ENCODE measurements at regions of chr2 and their contacts with region 1.

Region 1: DNA sequence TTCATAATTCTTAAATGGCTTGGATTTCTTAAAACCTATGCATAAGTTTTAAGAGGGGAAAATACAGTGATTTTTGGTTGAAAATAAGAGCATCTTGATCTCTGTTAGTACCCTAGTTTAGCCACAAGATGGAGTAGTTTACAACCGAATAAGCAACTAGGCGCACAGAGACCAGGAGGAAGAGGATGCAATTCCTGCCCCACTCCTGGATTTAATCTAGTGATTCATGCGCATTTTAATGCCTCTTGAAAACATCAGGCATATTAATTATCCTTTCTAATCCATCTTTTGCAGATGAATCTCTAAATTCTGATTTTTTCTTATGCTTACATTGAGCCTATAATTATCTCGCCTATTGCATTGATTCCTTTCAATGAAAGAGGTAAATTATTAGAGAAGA is 76.7 kb downstream of the MRPS9 start:
- DNase-seq: peak; percentile 52
- H3K4me3 ChIP-seq: no peak overlapping the region
- H3K27ac ChIP-seq: no peak overlapping the region
- H3K4me1 ChIP-seq: no peaks in the 10 kb centered on the region
- H3K27me3 ChIP-seq: peaks cover 0 to 2% of the 10 kb centered on the region in 2 experiments
- CTCF ChIP-seq: peak; percentile 39 to 49
- POLR2A ChIP-seq: no peak

Region 2: DNA sequence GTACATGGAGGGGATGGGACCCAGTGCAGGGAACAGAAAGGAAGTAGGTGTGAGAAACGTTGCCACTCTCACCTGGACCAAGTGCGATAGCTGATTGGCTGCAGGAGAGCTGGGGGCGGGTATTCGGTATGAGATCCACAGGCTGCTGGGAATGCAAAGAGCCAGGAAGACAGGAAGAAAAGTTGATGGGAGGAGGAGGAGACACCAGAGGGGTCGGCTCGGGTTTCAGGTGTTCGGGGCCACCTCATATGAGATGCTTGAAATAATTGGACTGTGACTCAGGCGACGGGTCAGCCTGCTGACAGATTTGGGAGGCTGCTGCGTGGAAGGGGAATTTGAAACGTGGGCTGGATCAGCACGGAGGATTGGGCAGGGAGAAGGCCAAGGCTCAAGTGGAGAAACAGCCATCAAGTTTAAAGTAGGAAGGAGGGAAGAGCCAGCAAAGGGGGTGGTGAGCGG is 11.6 kb before region 1 on chr2:
- CTCF ChIA-PET with region 1: interaction called, 15 read pairs
- POLR2A ChIA-PET with region 1: no interaction called
- dilution Hi-C with region 1: no loop called
- intact Hi-C with region 1: no loop called
- DNase-seq: no peak
- H3K4me3 ChIP-seq: no peak overlapping the region
- H3K27ac ChIP-seq: no peak overlapping the region
- H3K4me1 ChIP-seq: no peaks in the 10 kb centered on the region
- H3K27me3 ChIP-seq: no peaks in the 10 kb centered on the region
- CTCF ChIP-seq: no peak
- POLR2A ChIP-seq: no peak

Region 3: DNA sequence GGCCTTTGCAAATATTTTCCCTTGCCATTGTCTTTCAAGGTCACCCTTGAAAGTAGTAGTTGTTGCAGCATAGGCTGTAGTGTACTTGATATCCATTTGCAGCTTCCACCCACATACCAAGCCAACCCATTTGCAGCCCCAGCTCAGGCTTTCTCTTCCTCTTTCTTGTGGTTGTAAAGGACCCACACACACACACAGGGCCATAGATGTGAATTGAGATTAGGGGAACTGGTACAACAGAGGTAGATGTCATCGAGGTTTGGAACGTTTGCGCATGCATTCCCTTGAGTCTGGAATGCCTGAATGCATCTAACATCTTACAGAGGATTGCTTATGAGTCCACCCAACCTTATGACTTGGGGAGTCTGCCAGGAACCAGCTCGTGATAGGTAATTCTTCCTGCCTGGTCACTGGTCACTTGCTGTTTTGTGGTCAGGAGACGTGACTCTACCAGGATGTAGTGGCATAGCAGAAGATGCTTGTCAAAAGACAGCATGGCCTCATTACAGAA is 15.2 kb after region 1 on chr2:
- CTCF ChIA-PET with region 1: interaction called, 13 read pairs
- POLR2A ChIA-PET with region 1: no interaction called
- dilution Hi-C with region 1: no loop called
- intact Hi-C with region 1: no loop called
- DNase-seq: no peak
- H3K4me3 ChIP-seq: no peak overlapping the region
- H3K27ac ChIP-seq: no peak overlapping the region
- H3K4me1 ChIP-seq: no peaks in the 10 kb centered on the region
- H3K27me3 ChIP-seq: peaks cover 4 to 6% of the 10 kb centered on the region in 2 experiments
- CTCF ChIP-seq: no peak
- POLR2A ChIP-seq: no peak

Region 4: GRCh38 chr2:105179469-105180372 is 65.2 kb after region 1 on chr2:
- CTCF ChIA-PET with region 1: interaction called, 28 read pairs
- POLR2A ChIA-PET with region 1: no interaction called
- dilution Hi-C with region 1: no loop called
- intact Hi-C with region 1: loop called (anchors 1 kb)
- DNase-seq: peak; percentile 77
- H3K4me3 ChIP-seq: no peak overlapping the region
- H3K27ac ChIP-seq: no peak overlapping the region
- H3K4me1 ChIP-seq: no peaks in the 10 kb centered on the region
- H3K27me3 ChIP-seq: peaks cover 6 to 11% of the 10 kb centered on the region in 2 experiments
- CTCF ChIP-seq: peak; percentile 33 to 64
- POLR2A ChIP-seq: no peak

Region 5: GRCh38 chr2:105235388-105236054 is 121.0 kb after region 1 on chr2:
- CTCF ChIA-PET with region 1: interaction called, 225 read pairs
- POLR2A ChIA-PET with region 1: no interaction called
- dilution Hi-C with region 1: no loop called
- intact Hi-C with region 1: loop called (anchors 1 kb)
- DNase-seq: peak; percentile 73
- H3K4me3 ChIP-seq: no peak overlapping the region
- H3K27ac ChIP-seq: no peak overlapping the region
- H3K4me1 ChIP-seq: peaks cover 4% of the 10 kb centered on the region
- H3K27me3 ChIP-seq: peaks cover 2 to 7% of the 10 kb centered on the region in 2 experiments
- CTCF ChIP-seq: peak; percentile 70 to 79
- POLR2A ChIP-seq: no peak

Region 6: GRCh38 chr2:105294844-105295481 is 180.4 kb after region 1 on chr2:
- CTCF ChIA-PET with region 1: interaction called, 17 read pairs
- POLR2A ChIA-PET with region 1: no interaction called
- dilution Hi-C with region 1: no loop called
- intact Hi-C with region 1: loop called (anchors 1 kb)
- DNase-seq: peak; percentile 57
- H3K4me3 ChIP-seq: no peak overlapping the region
- H3K27ac ChIP-seq: no peak overlapping the region
- H3K4me1 ChIP-seq: no peaks in the 10 kb centered on the region
- H3K27me3 ChIP-seq: no peaks in the 10 kb centered on the region
- CTCF ChIP-seq: peak; percentile 48 to 71
- POLR2A ChIP-seq: no peak

Region 7: DNA sequence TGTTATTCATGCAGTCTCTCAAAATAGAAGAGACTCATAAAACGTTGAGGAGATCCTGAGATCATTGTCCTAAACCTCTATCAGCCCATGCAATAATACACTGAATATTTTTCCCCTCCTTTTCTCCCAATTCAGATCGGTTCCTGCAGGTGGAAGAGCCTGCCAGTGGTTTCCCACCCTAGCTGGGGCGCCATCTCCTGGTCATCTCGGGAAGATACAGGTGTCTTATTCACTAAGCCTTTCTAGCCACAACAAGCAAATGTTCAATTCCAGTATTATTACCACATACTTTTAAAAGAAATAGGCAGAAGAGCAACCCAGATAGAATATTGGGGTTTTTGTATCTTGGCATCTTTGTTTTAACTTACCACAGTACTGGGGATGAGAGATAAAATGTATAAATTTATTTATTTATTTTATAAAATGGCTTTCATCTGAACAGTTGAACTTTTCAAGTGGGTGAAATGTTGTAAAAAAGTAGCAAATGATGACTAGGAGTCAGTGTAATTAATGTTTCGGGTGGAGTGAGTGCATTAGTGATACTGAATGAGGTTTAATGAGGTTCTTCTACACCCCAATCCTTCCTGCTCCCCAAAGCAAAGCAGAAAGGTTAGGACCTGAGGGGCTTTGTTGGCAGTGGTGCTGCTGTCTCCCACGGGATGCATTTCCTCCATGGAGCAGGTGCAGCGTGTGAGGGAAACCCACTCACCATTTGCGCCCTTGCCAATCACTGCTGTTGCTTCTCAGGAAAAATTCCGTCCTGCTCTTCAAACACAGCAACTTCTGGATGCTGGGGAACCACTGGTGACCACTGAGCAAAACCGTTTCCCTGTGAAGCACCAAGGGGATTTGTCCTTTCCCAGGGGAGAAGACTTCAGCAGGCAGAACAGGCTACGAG is 431.4 kb after region 1 on chr2:
- CTCF ChIA-PET with region 1: no interaction called
- POLR2A ChIA-PET with region 1: no interaction called
- dilution Hi-C with region 1: no loop called
- intact Hi-C with region 1: loop called (anchors 1 kb)
- DNase-seq: peak; percentile 76
- H3K4me3 ChIP-seq: no peak overlapping the region
- H3K27ac ChIP-seq: no peak overlapping the region
- H3K4me1 ChIP-seq: peaks cover 17% of the 10 kb centered on the region
- H3K27me3 ChIP-seq: peaks cover 0 to 3% of the 10 kb centered on the region in 2 experiments
- CTCF ChIP-seq: peak; percentile 74 to 77
- POLR2A ChIP-seq: no peak

Region 8: GRCh38 chr2:105999211-105999989 is 884.8 kb after region 1 on chr2:
- CTCF ChIA-PET with region 1: no interaction called
- POLR2A ChIA-PET with region 1: no interaction called
- dilution Hi-C with region 1: no loop called
- intact Hi-C with region 1: no loop called
- DNase-seq: no peak
- H3K4me3 ChIP-seq: no peak overlapping the region
- H3K27ac ChIP-seq: no peak overlapping the region
- H3K4me1 ChIP-seq: no peaks in the 10 kb centered on the region
- H3K27me3 ChIP-seq: no peaks in the 10 kb centered on the region
- CTCF ChIP-seq: no peak
- POLR2A ChIP-seq: no peak